Activated CD8-positive, alpha-beta memory T cell treated with anti-CD3 and anti-CD28 coated beads, Interleukin-2, amount 10 ng/mL, durations not matched to agents 7 days and 5 days (primary cell): ENCODE measurements at regions of chr1 and their contacts with region 1.

Region 1: DNA sequence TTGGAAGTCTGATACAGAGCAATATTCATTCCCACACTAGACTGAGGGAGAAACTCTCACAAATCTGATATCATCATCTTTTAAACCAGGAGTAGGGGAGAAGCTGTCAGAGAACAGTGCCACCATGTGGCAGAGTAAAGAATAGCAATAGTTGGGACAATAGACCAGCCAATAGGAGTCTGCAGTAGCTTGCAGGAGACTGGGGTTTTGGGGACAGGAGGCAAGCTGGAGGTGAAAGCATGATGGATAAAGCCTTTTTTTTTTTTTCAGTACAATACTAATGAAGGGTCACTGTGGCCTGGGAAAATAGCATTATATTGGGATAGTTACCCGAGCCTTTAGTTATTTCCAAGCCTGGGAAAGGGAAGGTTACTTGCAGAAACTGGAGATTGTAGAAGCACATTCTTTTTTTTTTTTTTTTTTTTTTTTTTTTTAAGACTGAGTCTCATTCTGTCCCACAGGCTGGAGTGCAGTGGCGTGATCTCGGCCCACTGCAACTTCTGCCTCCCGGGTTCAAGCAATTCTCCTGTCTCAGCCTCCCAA is 120.7 kb downstream of the S1PR1 start:
- DNase-seq: peak; percentile 80
- ATAC-seq: peak; percentile 99
- H3K4me3 Mint-ChIP-seq: no peak overlapping the region
- H3K27ac Mint-ChIP-seq: no peak overlapping the region
- H3K4me1 Mint-ChIP-seq: peaks cover 7% of the 10 kb centered on the region
- H3K27me3 Mint-ChIP-seq: peaks cover 25% of the 10 kb centered on the region

Region 2: GRCh38 chr1:100941098-100941527 is 416.4 kb before region 1 on chr1:
- CTCF ChIA-PET with region 1: no interaction called
- DNase-seq: peak; percentile 55
- ATAC-seq: peak; percentile 69
- H3K4me3 Mint-ChIP-seq: peak overlapping the region; percentile 65
- H3K27ac Mint-ChIP-seq: peak overlapping the region; percentile 97
- H3K4me1 Mint-ChIP-seq: peaks cover 25% of the 10 kb centered on the region
- H3K27me3 Mint-ChIP-seq: peaks cover 3% of the 10 kb centered on the region

Region 3: GRCh38 chr1:101298663-101299062 is 58.9 kb before region 1 on chr1:
- CTCF ChIA-PET with region 1: interaction called, 12 read pairs
- DNase-seq: no peak
- ATAC-seq: no peak
- H3K4me3 Mint-ChIP-seq: no peak overlapping the region
- H3K27ac Mint-ChIP-seq: no peak overlapping the region
- H3K4me1 Mint-ChIP-seq: peaks cover 5% of the 10 kb centered on the region
- H3K27me3 Mint-ChIP-seq: peaks cover 51% of the 10 kb centered on the region

Region 4: GRCh38 chr1:101344745-101345144 is 12.8 kb before region 1 on chr1:
- CTCF ChIA-PET with region 1: interaction called, 13 read pairs
- DNase-seq: no peak
- ATAC-seq: no peak
- H3K4me3 Mint-ChIP-seq: no peak overlapping the region
- H3K27ac Mint-ChIP-seq: no peak overlapping the region
- H3K4me1 Mint-ChIP-seq: peaks cover 37% of the 10 kb centered on the region
- H3K27me3 Mint-ChIP-seq: peaks cover 2% of the 10 kb centered on the region

Region 5: DNA sequence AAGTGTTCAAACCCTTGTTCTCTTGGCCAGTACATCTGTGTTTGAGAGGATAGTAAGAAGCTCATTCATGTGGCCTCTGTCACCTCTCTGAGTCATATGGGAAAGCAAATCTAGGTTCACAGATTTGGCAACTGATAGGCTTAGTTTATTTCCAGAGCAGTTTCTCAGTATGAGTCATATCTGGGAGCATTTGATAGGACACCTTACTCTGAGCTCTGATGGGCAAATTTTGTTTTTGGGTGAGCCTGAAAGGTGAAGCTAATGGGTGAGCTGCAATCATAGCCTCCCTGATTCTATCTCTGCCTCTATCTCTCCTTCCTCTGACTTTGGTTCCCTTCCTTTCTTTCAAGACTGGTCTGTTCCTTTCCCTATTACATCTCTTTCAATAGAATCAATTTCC is 13.7 kb after region 1 on chr1:
- CTCF ChIA-PET with region 1: interaction called, 17 read pairs
- DNase-seq: peak; percentile 46
- ATAC-seq: peak; percentile 93
- H3K4me3 Mint-ChIP-seq: no peak overlapping the region
- H3K27ac Mint-ChIP-seq: no peak overlapping the region
- H3K4me1 Mint-ChIP-seq: peaks cover 13% of the 10 kb centered on the region
- H3K27me3 Mint-ChIP-seq: peaks cover 26% of the 10 kb centered on the region

Region 6: DNA sequence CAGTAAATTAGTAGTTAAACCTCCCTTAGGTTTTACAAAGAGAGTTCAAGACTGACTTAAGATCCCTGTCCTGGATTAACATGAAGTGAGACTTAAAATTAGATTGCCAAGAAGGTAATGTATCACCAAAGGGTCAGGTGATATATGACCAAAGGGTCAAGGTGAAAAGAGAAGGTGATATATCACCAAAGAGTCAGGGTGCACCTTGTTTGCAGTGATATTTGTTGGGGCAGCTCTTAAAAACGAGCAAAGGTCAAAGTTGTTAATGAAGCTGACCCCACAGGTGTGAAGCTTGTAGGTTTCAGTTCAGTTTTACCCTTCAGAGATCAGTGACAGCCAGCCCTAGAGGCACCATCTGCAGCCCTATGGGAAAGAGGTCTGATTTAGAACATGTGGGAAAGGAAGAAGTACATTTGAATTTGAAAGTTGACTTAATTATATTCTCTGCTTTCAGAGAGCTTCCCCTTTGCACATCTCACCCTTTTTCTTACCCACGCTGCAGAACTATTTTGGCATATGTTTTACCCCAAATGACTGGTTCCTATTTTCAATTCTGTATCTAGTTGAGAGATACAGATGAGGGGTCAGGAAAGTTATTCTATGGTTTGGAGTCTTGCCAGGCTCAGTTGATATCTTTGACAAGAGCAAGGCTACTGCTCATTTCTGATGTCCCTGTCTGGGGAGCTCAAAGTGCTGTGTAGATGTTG is 50.1 kb after region 1 on chr1:
- CTCF ChIA-PET with region 1: no interaction called
- DNase-seq: no peak
- ATAC-seq: no peak
- H3K4me3 Mint-ChIP-seq: no peak overlapping the region
- H3K27ac Mint-ChIP-seq: no peak overlapping the region
- H3K4me1 Mint-ChIP-seq: peaks cover 7% of the 10 kb centered on the region
- H3K27me3 Mint-ChIP-seq: peaks cover 49% of the 10 kb centered on the region